Adrenal gland (tissue), 19 donors: ENCODE measurements at regions of chr5 and their contacts with region 1.

Region 1: DNA sequence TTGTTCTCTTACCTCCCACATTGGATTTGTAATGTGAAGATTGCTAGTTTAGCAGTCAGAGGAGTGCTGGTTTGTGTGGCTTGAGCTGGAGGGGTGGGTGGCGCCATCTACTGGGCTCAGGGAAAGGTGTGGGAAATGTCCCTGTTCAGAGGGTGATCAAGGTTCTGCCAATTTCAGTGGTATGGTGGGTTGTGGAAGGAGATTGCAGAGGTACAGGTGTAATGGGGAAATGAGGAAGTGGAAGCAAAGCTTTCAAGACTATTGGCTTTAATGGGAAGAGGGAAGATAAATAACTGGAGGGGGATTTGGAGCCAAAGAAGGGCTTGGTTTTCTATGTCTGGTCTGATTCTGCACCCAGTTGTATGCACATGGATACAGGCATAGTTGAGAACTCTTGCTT is 76.4 kb downstream of the OSMR start:
- DNase-seq: peak in 6 of 7 donors; percentile 48 to 73 (median 64)
- H3K4me3 ChIP-seq: no peak overlapping the region
- H3K27ac ChIP-seq: no peak overlapping the region
- H3K4me1 ChIP-seq: peaks cover 8 to 11% of the 10 kb centered on the region in 2 donors
- H3K27me3 ChIP-seq: no peaks in the 10 kb centered on the region
- CTCF ChIP-seq: peak; percentile 59 to 78 (median 71)
- POLR2A ChIP-seq: no peak

Region 2: GRCh38 chr5:38831909-38832308 is 90.3 kb before region 1 on chr5:
- intact Hi-C with region 1: loop called in 1 of 2 experiments (anchors 5 kb)
- DNase-seq: no peak
- H3K4me3 ChIP-seq: no peak overlapping the region
- H3K27ac ChIP-seq: peak overlapping the region in 1 of 5 donors; percentile 33
- H3K4me1 ChIP-seq: peaks cover 0 to 12% of the 10 kb centered on the region in 2 donors
- H3K27me3 ChIP-seq: no peaks in the 10 kb centered on the region
- CTCF ChIP-seq: peak in 5 of 6 experiments; percentile 12 to 58 (median 37)
- POLR2A ChIP-seq: no peak